T-cell (primary cell): ENCODE measurements at regions of chr1 and their contacts with region 1.

Region 1: GRCh38 chr1:52424231-52424636 is 19.8 kb downstream of the PRPF38A start:
- DNase-seq: peak in 28 of 35 experiments; percentile 7 to 73 (median 26)
- ATAC-seq: peak; percentile 86 to 94 (median 93)
- H3K4me3 ChIP-seq: peak overlapping the region; percentile 0 to 23
- H3K4me3 Mint-ChIP-seq: peak overlapping the region; percentile 49 to 72 (median 66)
- H3K27ac ChIP-seq: peak overlapping the region; percentile 69
- H3K27ac Mint-ChIP-seq: peak overlapping the region; percentile 83 to 92
- H3K4me1 ChIP-seq: peaks cover 23 to 43% of the 10 kb centered on the region in 2 experiments
- H3K4me1 Mint-ChIP-seq: peaks cover 52 to 57% (median 56%) of the 10 kb centered on the region in 3 donors
- H3K27me3 ChIP-seq: no peaks in the 10 kb centered on the region
- H3K27me3 Mint-ChIP-seq: no peaks in the 10 kb centered on the region

Region 2: DNA sequence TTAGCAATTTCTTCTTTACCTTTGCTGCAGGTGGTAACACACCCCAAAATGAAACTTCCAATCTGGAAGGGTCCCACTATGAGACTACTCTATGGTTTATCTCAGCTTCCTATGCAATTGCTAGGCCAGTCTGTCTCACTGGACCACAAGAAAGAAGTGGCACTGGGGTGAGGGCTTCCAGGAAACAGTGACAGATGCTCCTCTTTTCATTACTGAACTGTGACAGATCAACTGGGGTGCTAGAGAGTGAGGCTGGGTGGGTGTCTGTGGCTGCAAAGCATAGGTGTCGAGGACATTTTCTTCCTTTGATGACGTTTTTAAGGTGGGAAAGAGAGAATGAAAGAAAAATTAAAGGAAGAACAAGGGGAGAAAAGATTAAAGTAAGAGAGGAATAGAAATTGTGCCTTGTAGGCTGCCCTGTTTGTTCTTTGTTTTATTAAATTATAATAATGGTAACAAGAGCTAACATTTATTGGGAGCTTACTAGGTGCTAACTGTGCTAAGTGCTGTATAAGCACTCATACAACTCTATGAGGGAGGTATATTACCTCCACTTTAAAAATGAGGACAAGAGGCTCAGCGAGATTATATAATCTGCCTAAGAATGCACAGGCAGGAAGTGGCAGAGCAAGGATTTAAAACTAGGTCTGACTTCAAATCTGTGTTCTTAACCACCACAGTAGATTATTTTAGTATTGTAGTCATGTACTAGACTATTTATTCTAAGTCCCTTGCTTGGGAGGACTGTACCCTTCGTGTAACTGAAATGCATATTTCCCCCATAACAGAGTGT is 1973.2 kb before region 1 on chr1:
- CTCF ChIA-PET with region 1: no interaction called
- POLR2A ChIA-PET with region 1: no interaction called
- DNase-seq: peak in 10 of 35 experiments; percentile 1 to 17 (median 8)
- ATAC-seq: peak in 2 of 4 experiments; percentile 55 to 63
- H3K4me3 ChIP-seq: no peak overlapping the region
- H3K4me3 Mint-ChIP-seq: peak overlapping the region in 1 of 3 donors; percentile 2
- H3K27ac ChIP-seq: peak overlapping the region; percentile 41
- H3K27ac Mint-ChIP-seq: peak overlapping the region; percentile 60 to 77
- H3K4me1 ChIP-seq: peaks cover 2% of the 10 kb centered on the region in 2 experiments
- H3K4me1 Mint-ChIP-seq: peaks cover 35 to 40% (median 38%) of the 10 kb centered on the region in 3 donors
- H3K27me3 ChIP-seq: no peaks in the 10 kb centered on the region
- H3K27me3 Mint-ChIP-seq: no peaks in the 10 kb centered on the region

Region 3: DNA sequence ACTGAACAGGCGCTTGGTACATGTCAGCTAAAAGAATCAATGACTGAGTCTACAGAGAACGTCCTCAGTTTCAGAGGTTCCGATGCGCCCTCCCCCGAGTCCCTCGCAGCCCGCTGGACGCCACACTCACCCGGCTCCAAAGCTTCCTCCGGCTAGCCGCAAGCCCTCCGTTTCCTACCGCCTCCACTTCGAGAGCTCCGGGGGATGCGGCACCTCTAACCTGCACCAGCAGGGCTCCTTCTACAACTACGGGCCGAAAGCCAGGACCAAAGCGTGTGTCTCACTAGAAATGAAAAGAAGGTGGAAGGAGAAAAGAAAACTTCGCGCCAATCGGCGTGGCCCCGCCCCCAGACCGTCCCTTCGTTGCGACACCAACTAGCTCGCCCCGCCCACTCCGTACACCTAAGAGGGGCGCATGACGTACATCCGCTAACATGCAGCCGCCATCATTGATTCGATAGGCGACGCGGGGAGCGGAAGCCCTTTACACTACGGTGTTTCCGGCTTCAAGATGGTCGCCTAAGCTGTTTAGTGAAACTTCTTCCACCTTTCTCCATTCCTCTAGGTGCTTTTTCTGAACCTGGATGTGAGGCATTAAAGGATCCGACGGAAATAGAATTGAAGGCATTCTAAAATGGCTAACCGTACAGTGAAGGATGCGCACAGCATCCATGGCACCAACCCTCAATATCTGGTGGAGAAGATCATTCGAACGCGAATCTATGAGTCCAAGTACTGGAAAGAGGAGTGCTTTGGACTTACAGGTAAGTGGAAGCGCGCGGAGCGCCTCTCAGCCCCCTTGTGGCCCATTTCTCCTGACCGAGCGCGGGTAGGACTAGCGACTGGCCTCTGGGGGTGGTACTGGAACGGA is 19.9 kb before region 1 on chr1 and contains the starts of genes ORC1 and PRPF38A:
- CTCF ChIA-PET with region 1: interaction called, 6 to 38 read pairs
- POLR2A ChIA-PET with region 1: interaction called, 8 to 31 read pairs
- DNase-seq: peak; percentile 90 to 99 (median 97)
- ATAC-seq: peak; percentile 93 to 98 (median 96)
- H3K4me3 ChIP-seq: peak within 1 kb of the TSS; percentile 74 to 96
- H3K4me3 Mint-ChIP-seq: peak within 1 kb of the TSS; percentile 97 to 100 (median 100)
- H3K27ac ChIP-seq: peak within 1 kb of the TSS; percentile 92
- H3K27ac Mint-ChIP-seq: peak within 1 kb of the TSS; percentile 97 to 98
- H3K4me1 ChIP-seq: peaks cover 16 to 21% of the 10 kb centered on the region in 2 experiments
- H3K4me1 Mint-ChIP-seq: peaks cover 38 to 49% (median 47%) of the 10 kb centered on the region in 3 donors
- H3K27me3 ChIP-seq: no peaks in the 10 kb centered on the region
- H3K27me3 Mint-ChIP-seq: no peaks in the 10 kb centered on the region
- total RNA-seq, gene ORC1: 1.7 to 2.1 (median 2.0) TPM
- total RNA-seq, gene PRPF38A: 58.6 to 66.1 (median 64.7) TPM

Region 4: DNA sequence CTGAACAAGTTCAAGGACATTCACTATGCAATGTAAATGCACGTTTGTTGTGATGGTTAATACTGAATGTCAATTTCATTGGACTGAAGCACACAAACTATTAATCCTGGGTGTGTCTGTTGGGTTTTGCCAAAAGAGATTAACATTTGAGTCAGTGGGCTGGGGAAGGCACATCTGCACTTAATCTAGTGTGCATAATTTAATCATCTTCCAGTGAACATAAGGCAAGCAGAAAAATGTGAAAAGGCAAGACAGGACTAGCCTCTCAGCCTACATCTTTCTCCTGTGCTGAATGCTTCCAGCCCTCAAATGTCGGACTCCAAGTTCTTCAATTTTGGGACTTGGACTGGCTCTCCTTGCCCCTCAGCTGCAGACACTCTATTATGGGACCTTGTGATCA is 20.2 kb after region 1 on chr1:
- CTCF ChIA-PET with region 1: no interaction called
- POLR2A ChIA-PET with region 1: interaction called in 1 of 2 experiments, 11 read pairs
- DNase-seq: no peak
- ATAC-seq: no peak
- H3K4me3 ChIP-seq: no peak overlapping the region
- H3K4me3 Mint-ChIP-seq: no peak overlapping the region
- H3K27ac ChIP-seq: no peak overlapping the region
- H3K27ac Mint-ChIP-seq: no peak overlapping the region
- H3K4me1 ChIP-seq: no peaks in the 10 kb centered on the region
- H3K4me1 Mint-ChIP-seq: no peaks in the 10 kb centered on the region
- H3K27me3 ChIP-seq: no peaks in the 10 kb centered on the region
- H3K27me3 Mint-ChIP-seq: no peaks in the 10 kb centered on the region

Region 5: DNA sequence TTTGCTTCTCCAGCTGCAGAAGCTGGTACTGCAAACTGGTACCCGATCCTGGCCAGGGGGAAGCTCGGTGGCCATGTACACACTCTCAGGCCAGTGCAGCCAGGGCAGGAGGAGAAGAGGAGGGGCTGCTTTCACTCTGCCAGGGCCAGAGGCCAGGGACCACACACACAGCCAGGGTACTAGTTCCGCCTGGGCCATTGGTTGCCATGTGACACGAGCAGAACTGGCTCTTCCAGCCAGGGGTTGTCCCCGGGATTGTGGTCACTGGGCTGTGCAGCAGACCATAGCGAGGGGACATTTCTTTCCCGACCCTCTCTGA is 205.1 kb after region 1 on chr1:
- CTCF ChIA-PET with region 1: no interaction called
- POLR2A ChIA-PET with region 1: no interaction called
- DNase-seq: no peak
- ATAC-seq: no peak
- H3K4me3 ChIP-seq: no peak overlapping the region
- H3K4me3 Mint-ChIP-seq: no peak overlapping the region
- H3K27ac ChIP-seq: no peak overlapping the region
- H3K27ac Mint-ChIP-seq: peak overlapping the region in 1 of 2 donors; percentile 73
- H3K4me1 ChIP-seq: peaks cover 10 to 43% of the 10 kb centered on the region in 2 experiments
- H3K4me1 Mint-ChIP-seq: peaks cover 47 to 55% (median 49%) of the 10 kb centered on the region in 3 donors
- H3K27me3 ChIP-seq: no peaks in the 10 kb centered on the region
- H3K27me3 Mint-ChIP-seq: no peaks in the 10 kb centered on the region